ENCODE measurements at regions of chr20 and their contacts with region 1.

Region 1: GRCh38 chr20:5908981-5909380 is 41.4 kb downstream of the TRMT6 start:
- DNase-seq: no peak
- ATAC-seq: no peak
- H3K4me3 ChIP-seq: no peak overlapping the region
- H3K27ac ChIP-seq: no peak overlapping the region
- H3K4me1 ChIP-seq: peaks cover 3% of the 10 kb centered on the region
- H3K27me3 ChIP-seq: peaks cover 2% of the 10 kb centered on the region

Region 2: DNA sequence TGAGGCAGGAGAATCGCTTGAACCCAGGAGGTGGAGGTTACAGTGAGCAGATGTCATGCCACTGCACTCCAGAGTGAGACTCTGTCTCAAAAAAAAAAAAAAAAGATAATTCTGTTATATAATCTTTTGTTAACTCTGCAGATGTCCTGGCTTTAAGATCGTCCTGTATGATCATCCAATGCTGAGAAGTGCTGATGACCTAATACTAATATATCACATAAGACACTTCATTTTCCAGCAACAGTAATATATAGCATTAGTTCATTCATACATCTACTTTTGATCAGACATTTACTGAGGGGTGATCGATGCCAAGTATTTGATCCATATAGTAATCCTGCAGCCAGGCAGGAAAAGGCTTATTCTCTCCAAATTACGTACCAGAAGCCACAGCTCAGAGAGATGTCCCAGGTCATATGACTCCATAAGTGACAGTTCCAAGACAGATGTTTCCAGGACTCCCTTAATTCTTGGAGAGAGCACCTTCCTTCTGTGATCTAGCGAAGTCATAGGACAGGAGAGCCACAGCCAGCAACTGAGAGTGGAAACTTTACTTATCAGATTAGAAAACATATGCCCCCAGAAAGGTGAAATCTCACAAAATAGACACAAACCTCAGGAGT is 98.1 kb before region 1 on chr20:
- intact Hi-C with region 1: loop called in 1 of 4 experiments (anchors 10 kb)
- DNase-seq: no peak
- ATAC-seq: no peak
- H3K4me3 ChIP-seq: no peak overlapping the region
- H3K27ac ChIP-seq: no peak overlapping the region
- H3K4me1 ChIP-seq: peaks cover 2% of the 10 kb centered on the region
- H3K27me3 ChIP-seq: no peaks in the 10 kb centered on the region

Region 3: GRCh38 chr20:6014017-6014416 is 105.0 kb after region 1 on chr20:
- intact Hi-C with region 1: no loop called
- DNase-seq: no peak
- ATAC-seq: no peak
- H3K4me3 ChIP-seq: no peak overlapping the region
- H3K27ac ChIP-seq: no peak overlapping the region
- H3K4me1 ChIP-seq: no peaks in the 10 kb centered on the region
- H3K27me3 ChIP-seq: no peaks in the 10 kb centered on the region